ENCODE measurements at regions of chr19 and their contacts with region 1.

Region 1: GRCh38 chr19:49546825-49547565 is 19.2 kb downstream of the RCN3 start:
- DNase-seq: peak; percentile 68
- H3K4me3 Mint-ChIP-seq: peak overlapping the region; percentile 75
- H3K27ac Mint-ChIP-seq: peak overlapping the region; percentile 59
- H3K4me1 Mint-ChIP-seq: peaks cover 29% of the 10 kb centered on the region
- H3K27me3 Mint-ChIP-seq: no peaks in the 10 kb centered on the region

Region 2: GRCh38 chr19:49502866-49503581 is 44.0 kb before region 1 on chr19:
- CTCF ChIA-PET with region 1: interaction called, 216 read pairs
- POLR2A ChIA-PET with region 1: interaction called, 3 read pairs
- intact Hi-C with region 1: loop called (anchors 1 kb)
- DNase-seq: peak; percentile 64
- H3K4me3 Mint-ChIP-seq: no peak overlapping the region
- H3K27ac Mint-ChIP-seq: peak overlapping the region; percentile 51
- H3K4me1 Mint-ChIP-seq: peaks cover 45% of the 10 kb centered on the region
- H3K27me3 Mint-ChIP-seq: no peaks in the 10 kb centered on the region

Region 3: DNA sequence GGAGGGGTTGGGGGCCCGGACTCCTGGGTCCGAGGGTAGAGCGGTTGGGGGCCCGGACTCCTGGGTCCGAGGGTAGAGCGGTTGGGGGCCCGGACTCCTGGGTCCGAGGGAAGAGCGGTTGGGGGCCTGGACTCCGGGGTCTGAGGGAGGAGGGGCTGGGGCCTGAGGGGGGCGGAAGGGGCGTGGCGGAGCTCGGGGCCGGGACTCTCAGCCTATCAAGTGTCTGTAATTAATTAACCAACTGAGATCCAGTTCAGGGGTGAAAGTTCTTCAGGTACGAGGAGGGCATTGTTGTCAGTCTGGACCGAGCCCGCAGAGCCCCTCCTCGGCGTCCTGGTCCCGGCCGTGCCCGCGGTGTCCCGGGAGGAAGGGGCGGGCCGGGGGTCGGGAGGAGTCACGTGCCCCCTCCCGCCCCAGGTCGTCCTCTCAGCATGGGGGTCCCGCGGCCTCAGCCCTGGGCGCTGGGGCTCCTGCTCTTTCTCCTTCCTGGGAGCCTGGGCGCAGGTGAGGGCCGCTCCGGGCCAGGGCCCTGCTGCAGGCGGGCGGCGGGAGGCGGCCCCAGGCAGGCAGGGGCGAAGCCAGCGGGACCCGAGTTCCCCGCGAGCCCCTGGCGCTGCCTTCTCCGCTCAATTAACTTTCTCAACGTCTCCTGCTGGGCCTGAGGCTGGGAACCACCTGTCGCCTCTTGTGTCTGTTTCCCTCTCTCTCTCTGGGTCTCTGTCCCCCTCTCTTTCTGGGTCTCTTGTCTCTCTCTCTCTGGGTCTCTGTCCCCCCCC is 33.8 kb before region 1 on chr19:
- CTCF ChIA-PET with region 1: interaction called, 216 read pairs
- POLR2A ChIA-PET with region 1: interaction called, 3 read pairs
- intact Hi-C with region 1: no loop called
- DNase-seq: peak; percentile 50
- H3K4me3 Mint-ChIP-seq: peak overlapping the region; percentile 79
- H3K27ac Mint-ChIP-seq: peak overlapping the region; percentile 65
- H3K4me1 Mint-ChIP-seq: peaks cover 27% of the 10 kb centered on the region
- H3K27me3 Mint-ChIP-seq: no peaks in the 10 kb centered on the region

Region 4: DNA sequence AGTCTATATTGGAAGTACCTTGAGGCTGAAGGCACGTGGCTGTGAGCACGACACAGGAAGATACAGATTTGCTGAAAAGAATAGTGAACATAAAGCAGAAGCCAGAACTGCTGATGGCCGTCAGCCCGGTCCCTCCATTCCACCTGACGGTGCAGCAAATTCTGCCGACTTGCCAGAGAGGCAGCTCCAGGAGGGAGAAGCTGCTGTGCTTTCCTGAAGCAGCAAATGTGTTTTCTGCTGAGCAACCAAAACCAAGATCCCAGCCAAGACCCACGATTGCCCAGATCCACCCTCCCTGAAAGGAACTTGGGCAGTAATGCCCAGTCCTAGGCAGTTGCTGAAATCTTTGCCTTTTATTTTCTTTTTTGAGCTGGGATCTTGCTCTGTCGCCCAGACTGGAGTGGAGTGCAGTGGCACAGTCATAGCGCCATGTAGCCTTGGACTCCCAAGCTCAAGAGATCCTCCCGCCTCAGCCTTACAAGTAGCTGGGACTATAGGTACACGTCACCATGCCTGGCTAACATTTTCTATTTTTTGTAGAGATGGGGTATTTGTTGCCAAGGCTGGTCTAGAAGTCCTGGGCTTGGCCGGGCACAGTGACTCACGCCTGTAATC is 26.2 kb before region 1 on chr19:
- CTCF ChIA-PET with region 1: interaction called, 25 read pairs
- POLR2A ChIA-PET with region 1: no interaction called
- intact Hi-C with region 1: no loop called
- DNase-seq: no peak
- H3K4me3 Mint-ChIP-seq: no peak overlapping the region
- H3K27ac Mint-ChIP-seq: no peak overlapping the region
- H3K4me1 Mint-ChIP-seq: peaks cover 1% of the 10 kb centered on the region
- H3K27me3 Mint-ChIP-seq: no peaks in the 10 kb centered on the region

Region 5: GRCh38 chr19:49528211-49528771 is 18.7 kb before region 1 on chr19:
- CTCF ChIA-PET with region 1: interaction called, 15 read pairs
- POLR2A ChIA-PET with region 1: no interaction called
- intact Hi-C with region 1: no loop called
- DNase-seq: no peak
- H3K4me3 Mint-ChIP-seq: peak overlapping the region; percentile 72
- H3K27ac Mint-ChIP-seq: no peak overlapping the region
- H3K4me1 Mint-ChIP-seq: peaks cover 18% of the 10 kb centered on the region
- H3K27me3 Mint-ChIP-seq: no peaks in the 10 kb centered on the region

Region 6: DNA sequence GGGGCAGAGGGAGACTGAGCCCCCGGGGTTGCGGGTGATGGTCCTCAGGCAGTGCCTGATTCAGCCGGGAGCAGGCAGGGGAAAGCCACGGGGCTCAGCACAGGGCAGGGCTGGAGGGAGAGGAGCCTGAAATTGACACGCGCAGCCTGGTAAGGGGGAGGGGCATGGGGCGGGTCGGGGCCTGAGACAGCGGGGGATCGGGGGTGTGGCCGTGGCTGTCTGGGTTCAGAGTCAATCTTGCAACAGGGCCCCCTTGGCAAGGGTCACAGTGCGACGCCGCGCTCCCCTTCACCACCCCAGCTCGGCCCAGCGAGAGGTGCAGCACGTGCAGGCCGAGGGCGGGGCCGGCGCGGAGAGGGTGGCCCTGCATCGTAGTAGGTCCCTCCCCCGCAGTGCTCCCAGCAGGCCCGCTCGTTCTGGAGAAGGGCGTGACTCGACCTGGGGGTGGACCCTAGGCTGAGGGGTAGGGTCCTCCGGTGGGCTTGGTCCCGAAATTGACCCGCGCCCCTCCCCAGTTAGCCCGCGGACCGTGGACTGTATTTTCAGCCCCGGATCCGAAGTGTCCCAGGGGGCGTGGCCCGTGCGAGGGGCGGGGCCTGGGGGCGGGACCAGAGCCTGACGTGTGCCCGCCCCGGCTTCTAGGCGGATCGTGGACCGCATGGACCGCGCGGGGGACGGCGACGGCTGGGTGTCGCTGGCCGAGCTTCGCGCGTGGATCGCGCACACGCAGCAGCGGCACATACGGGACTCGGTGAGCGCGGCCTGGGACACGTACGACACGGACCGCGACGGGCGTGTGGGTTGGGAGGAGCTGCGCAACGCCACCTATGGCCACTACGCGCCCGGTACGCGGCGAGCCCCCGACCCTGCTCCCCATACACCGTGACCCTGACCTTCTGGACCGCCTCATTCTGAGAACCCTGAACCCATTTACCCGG is 13.2 kb before region 1 on chr19:
- CTCF ChIA-PET with region 1: interaction called, 36 read pairs
- POLR2A ChIA-PET with region 1: interaction called, 3 read pairs
- intact Hi-C with region 1: no loop called
- DNase-seq: peak; percentile 83
- H3K4me3 Mint-ChIP-seq: peak overlapping the region; percentile 75
- H3K27ac Mint-ChIP-seq: no peak overlapping the region
- H3K4me1 Mint-ChIP-seq: peaks cover 20% of the 10 kb centered on the region
- H3K27me3 Mint-ChIP-seq: no peaks in the 10 kb centered on the region

Region 7: GRCh38 chr19:49580264-49581006 is 33.4 kb after region 1 on chr19 and contains the start of gene NOSIP:
- CTCF ChIA-PET with region 1: interaction called, 14 read pairs
- POLR2A ChIA-PET with region 1: interaction called, 3 read pairs
- intact Hi-C with region 1: no loop called
- DNase-seq: peak; percentile 98
- H3K4me3 Mint-ChIP-seq: peak within 1 kb of the TSS; percentile 97
- H3K27ac Mint-ChIP-seq: peak within 1 kb of the TSS; percentile 92
- H3K4me1 Mint-ChIP-seq: peaks cover 29% of the 10 kb centered on the region
- H3K27me3 Mint-ChIP-seq: no peaks in the 10 kb centered on the region
- total RNA-seq, gene NOSIP: 80.3 to 84.3 TPM

Measured in activated CD4-positive, alpha-beta memory T cell treated with anti-CD3 and anti-CD28 coated beads for 36 hours (primary cell).